Right lobe of liver (tissue), 6 donors: ENCODE measurements at regions of chr22 and their contacts with region 1.

Region 1: GRCh38 chr22:23385291-23386244 is 194.5 kb downstream of the IGLL1 start:
- DNase-seq: peak; percentile 81 to 87 (median 84)
- ATAC-seq: peak; percentile 84 to 97 (median 94)
- H3K4me3 ChIP-seq: no peak overlapping the region
- H3K27ac ChIP-seq: no peak overlapping the region
- H3K4me1 ChIP-seq: no peaks in the 10 kb centered on the region
- H3K27me3 ChIP-seq: no peaks in the 10 kb centered on the region
- CTCF ChIP-seq: peak; percentile 97 to 98 (median 98)
- POLR2A ChIP-seq: no peak

Region 2: DNA sequence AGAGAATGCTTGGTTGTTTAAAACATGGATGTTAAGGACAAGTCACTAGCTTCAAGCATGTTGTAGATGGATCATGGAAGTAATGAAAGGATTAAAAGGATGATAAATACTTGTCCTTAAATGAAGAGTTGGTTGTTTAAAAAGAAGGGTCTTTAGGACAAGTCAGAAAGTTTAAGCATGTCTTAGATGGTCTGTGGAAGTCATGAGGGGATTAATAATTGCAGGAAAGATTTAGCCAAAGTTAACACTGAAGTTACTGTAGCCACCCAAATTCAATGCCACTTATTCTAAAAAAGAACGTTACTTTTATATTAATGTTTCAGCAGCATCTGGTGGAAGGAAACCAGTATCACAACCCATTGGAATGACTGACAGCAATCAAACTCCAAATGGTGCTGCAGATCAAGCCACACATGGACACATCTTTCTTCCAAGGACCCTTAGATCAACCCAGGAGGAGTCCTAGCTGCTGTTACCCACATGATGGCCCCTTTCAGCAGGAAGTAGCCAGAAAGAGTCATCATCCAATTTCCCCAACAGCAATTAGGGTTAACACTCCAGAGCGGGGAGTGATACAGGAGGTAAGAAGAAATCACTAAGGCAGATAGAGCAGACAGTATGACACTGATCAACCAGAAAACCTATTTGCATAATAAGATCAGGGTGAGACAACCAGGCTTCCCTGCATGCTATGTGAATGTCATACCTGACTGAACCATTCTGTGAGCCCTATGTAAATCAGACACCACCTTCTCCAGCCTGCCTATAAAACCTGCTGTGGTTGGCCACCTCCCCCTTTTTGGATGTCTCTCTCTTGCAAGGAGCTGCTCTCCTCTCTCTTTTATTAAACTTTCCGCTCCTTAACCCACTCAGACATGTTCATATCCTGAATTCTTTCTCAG is 403.6 kb before region 1 on chr22:
- intact Hi-C with region 1: no loop called
- DNase-seq: no peak
- ATAC-seq: no peak
- H3K4me3 ChIP-seq: no peak overlapping the region
- H3K27ac ChIP-seq: no peak overlapping the region
- H3K4me1 ChIP-seq: no peaks in the 10 kb centered on the region
- H3K27me3 ChIP-seq: no peaks in the 10 kb centered on the region
- CTCF ChIP-seq: no peak
- POLR2A ChIP-seq: no peak

Region 3: DNA sequence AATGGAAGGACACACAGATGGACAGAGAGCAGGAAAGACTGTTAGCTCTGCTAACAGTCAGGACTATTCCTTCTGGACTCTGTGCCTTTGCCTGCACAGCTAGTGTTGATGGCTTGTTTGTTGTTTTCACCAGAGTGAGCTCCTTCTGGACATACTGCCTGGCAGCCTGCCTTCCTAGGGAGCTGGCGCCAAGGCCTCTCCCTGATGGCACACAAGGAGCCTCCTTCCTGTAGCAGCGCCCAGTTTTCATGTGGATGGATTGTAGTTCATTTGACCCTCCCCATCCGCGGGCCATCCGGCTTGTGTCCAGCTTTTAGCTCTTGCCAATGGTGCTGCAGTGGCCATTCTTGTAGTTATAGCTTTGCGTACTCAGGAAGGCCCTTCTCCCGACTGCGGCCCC is 221.9 kb before region 1 on chr22:
- intact Hi-C with region 1: loop called in 1 of 2 experiments (anchors 10 kb)
- DNase-seq: peak; percentile 69 to 86 (median 78)
- ATAC-seq: peak; percentile 64 to 79 (median 74)
- H3K4me3 ChIP-seq: no peak overlapping the region
- H3K27ac ChIP-seq: no peak overlapping the region
- H3K4me1 ChIP-seq: peaks cover 0 to 29% (median 10%) of the 10 kb centered on the region in 4 donors
- H3K27me3 ChIP-seq: no peaks in the 10 kb centered on the region
- CTCF ChIP-seq: no peak
- POLR2A ChIP-seq: no peak

Region 4: DNA sequence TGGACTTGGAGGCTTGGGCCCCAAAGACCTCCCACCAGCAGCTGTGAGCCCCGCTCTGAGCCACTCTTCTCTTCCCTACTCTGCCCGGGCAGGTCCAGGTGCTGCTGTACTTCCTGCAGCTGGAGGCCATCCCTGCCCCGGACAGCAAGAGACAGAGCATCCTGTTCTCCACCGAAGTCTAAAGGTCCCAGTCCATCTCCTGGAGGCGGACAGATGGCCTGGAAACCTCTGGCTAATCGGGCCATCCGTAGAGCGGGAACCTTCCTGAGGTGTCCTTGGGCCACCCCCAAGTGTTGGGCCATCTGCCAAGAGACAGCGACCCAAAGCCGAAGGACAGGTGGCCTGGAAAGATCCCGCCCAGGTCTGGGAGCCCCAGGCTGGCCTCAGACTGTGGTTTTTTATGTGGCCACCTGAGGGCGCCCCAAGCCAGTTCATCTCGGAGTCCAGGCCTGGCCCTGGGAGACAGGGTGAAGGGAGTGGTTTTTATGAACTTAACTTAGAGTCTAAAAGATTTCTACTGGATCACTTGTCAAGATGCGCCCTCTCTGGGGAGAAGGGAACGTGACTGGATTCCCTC is 70.1 kb before region 1 on chr22:
- intact Hi-C with region 1: loop called (anchors 5 to 10 kb)
- DNase-seq: peak in 2 of 3 donors; percentile 69 to 71
- ATAC-seq: peak; percentile 40 to 60 (median 56)
- H3K4me3 ChIP-seq: no peak overlapping the region
- H3K27ac ChIP-seq: no peak overlapping the region
- H3K4me1 ChIP-seq: no peaks in the 10 kb centered on the region
- H3K27me3 ChIP-seq: no peaks in the 10 kb centered on the region
- CTCF ChIP-seq: peak; percentile 20 to 79 (median 74)
- POLR2A ChIP-seq: no peak